Calu3 (cell line): ENCODE measurements at regions of chr21 and their contacts with region 1.

Region 1: DNA sequence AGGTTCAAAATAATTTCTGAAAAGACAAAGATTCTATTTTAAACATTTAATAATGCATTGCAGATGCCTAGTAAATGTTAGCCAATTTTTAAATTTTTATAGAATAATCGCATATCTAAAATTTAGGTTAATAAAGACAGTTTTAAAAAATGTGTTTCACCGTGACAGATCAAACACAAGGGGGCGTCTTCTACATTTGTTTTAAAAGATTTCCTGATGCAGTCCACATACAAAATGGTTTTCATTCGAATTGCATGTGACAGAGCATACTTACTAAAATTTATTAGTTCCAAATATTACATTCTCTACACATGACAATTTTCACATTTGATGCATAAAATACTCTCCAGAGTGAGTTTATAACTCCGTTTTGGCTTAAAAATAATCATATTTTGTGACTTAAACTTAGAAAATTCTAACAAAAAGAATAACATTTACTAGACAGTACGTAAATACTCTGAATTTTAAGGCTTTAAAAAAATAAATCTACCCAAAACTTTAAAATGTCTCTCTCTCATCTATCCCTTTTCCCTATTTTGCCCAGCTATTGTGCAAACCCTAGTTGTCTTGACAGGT is 75.5 kb downstream of the ADAMTS1 start:
- DNase-seq: peak; percentile 14
- H3K4me3 Mint-ChIP-seq: no peak overlapping the region
- H3K27ac Mint-ChIP-seq: no peak overlapping the region
- H3K4me1 Mint-ChIP-seq: peaks cover 20% of the 10 kb centered on the region
- H3K27me3 Mint-ChIP-seq: no peaks in the 10 kb centered on the region
- CTCF ChIP-seq: no peak

Region 2: DNA sequence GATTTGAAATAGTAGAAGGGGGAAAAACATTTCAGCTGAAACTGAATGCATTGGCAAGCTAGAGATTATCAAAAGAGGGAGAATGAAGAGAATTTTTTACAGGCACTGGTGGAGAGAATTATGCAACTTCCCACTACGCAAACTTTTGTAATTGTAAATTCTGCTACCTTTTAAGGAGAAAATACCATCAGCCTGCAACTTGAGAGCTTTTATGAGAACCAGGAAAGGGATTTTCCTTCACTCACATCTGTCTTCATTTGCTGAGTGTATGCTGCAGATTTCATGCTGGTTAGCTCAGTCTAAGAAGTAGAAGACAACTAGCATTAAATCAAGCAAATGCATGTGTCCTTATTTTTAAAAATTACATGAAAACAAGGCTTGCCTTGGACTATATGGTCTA is 31.8 kb after region 1 on chr21:
- CTCF ChIA-PET with region 1: no interaction called
- intact Hi-C with region 1: no loop called
- DNase-seq: no peak
- H3K4me3 Mint-ChIP-seq: no peak overlapping the region
- H3K27ac Mint-ChIP-seq: no peak overlapping the region
- H3K4me1 Mint-ChIP-seq: peaks cover 6% of the 10 kb centered on the region
- H3K27me3 Mint-ChIP-seq: no peaks in the 10 kb centered on the region
- CTCF ChIP-seq: no peak

Region 3: DNA sequence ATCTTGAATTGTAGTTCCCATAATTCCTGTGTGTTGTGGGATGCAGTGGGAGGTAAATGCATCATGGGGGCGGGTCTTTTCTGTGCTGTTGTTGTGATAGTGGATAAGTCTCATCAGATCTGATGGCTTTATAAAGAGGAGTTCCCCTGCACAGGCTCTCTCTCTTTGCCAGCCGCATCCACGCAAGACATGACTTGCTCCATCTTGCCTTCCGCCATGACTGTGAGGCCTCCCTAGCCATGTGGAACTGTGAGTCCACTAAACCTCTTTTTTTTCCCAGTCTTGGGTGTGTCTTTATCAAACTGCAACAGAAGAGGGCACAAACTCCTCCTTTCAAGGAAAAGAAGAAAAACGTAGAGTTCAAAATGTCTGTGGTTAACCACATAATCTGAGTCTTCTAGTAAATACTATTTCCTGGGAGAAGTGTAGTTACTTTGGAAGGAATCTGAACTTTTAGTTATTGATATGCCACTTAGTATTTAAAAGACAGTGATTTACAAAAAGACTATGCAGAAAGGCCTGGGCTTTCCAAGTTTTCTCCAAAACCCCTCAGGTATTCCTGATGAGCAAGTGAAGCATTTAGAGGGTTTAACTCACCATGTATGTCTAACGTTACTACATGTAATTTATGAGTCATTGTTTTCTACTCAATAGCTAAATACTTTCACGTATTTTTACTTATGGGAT is 65.5 kb after region 1 on chr21:
- CTCF ChIA-PET with region 1: no interaction called
- intact Hi-C with region 1: loop called (anchors 5 kb)
- DNase-seq: no peak
- H3K4me3 Mint-ChIP-seq: no peak overlapping the region
- H3K27ac Mint-ChIP-seq: no peak overlapping the region
- H3K4me1 Mint-ChIP-seq: no peaks in the 10 kb centered on the region
- H3K27me3 Mint-ChIP-seq: peaks cover 8% of the 10 kb centered on the region
- CTCF ChIP-seq: no peak

Region 4: DNA sequence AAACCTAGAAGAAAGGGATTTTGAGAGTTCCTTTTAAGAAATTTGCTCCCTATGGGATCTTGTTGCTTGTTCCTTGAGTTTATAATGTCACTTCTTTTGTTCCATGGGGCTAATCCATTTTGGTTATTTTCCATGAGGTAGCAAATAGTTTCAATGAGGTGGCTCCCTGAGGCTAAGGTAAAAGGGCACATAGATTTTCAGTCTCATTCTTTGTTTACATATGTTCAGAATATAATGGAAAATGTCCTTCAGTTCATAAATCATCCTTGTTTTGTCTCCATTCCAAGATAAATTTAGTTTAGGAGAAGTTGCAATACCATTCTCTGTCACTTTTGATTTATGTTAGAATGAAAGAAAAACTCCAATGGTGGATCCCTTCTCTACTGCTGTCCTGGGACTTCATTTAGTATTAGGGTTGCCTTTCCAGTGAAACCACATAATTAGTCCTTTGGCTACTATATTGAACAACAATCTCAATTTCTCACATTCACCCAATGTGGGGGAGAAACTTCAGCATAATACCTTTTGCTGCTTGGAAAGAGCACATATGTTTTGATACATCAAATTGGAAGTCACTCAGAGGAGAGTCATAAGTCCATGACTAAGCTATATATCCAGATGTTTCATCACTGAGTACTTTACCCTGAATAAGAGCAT is 278.1 kb after region 1 on chr21:
- CTCF ChIA-PET with region 1: no interaction called
- intact Hi-C with region 1: no loop called
- DNase-seq: no peak
- H3K4me3 Mint-ChIP-seq: no peak overlapping the region
- H3K27ac Mint-ChIP-seq: no peak overlapping the region
- H3K4me1 Mint-ChIP-seq: no peaks in the 10 kb centered on the region
- H3K27me3 Mint-ChIP-seq: no peaks in the 10 kb centered on the region
- CTCF ChIP-seq: no peak

Region 5: GRCh38 chr21:27079636-27080240 is 310.0 kb after region 1 on chr21:
- CTCF ChIA-PET with region 1: no interaction called
- intact Hi-C with region 1: no loop called
- DNase-seq: no peak
- H3K4me3 Mint-ChIP-seq: no peak overlapping the region
- H3K27ac Mint-ChIP-seq: no peak overlapping the region
- H3K4me1 Mint-ChIP-seq: no peaks in the 10 kb centered on the region
- H3K27me3 Mint-ChIP-seq: no peaks in the 10 kb centered on the region
- CTCF ChIP-seq: no peak